Common myeloid progenitor, CD34-positive (primary cell): ENCODE measurements at regions of chr11 and their contacts with region 1.

Region 1: GRCh38 chr11:75142714-75143419 is 8.0 kb upstream of the SLCO2B1 start:
- DNase-seq: peak; percentile 91 to 98 (median 97)
- H3K4me3 ChIP-seq: no peak overlapping the region
- H3K27ac ChIP-seq: no peak overlapping the region
- H3K4me1 ChIP-seq: peaks cover 4 to 29% (median 20%) of the 10 kb centered on the region in 4 experiments
- H3K27me3 ChIP-seq: peaks cover 0 to 4% (median 0%) of the 10 kb centered on the region in 5 experiments

Region 2: GRCh38 chr11:75087319-75088305 is 55.3 kb before region 1 on chr11:
- CTCF ChIA-PET with region 1: no interaction called
- POLR2A ChIA-PET with region 1: no interaction called
- DNase-seq: no peak
- H3K4me3 ChIP-seq: no peak overlapping the region
- H3K27ac ChIP-seq: no peak overlapping the region
- H3K4me1 ChIP-seq: no peaks in the 10 kb centered on the region
- H3K27me3 ChIP-seq: no peaks in the 10 kb centered on the region

Region 3: GRCh38 chr11:75103380-75104026 is 39.4 kb before region 1 on chr11:
- CTCF ChIA-PET with region 1: no interaction called
- POLR2A ChIA-PET with region 1: no interaction called
- DNase-seq: no peak
- H3K4me3 ChIP-seq: no peak overlapping the region
- H3K27ac ChIP-seq: no peak overlapping the region
- H3K4me1 ChIP-seq: no peaks in the 10 kb centered on the region
- H3K27me3 ChIP-seq: peaks cover 2 to 6% (median 3%) of the 10 kb centered on the region in 5 experiments

Region 4: GRCh38 chr11:75188671-75189070 is 45.8 kb after region 1 on chr11:
- CTCF ChIA-PET with region 1: interaction called, 32 read pairs
- POLR2A ChIA-PET with region 1: no interaction called
- DNase-seq: no peak
- H3K4me3 ChIP-seq: no peak overlapping the region
- H3K27ac ChIP-seq: no peak overlapping the region
- H3K4me1 ChIP-seq: peaks cover 0 to 4% (median 0%) of the 10 kb centered on the region in 4 experiments
- H3K27me3 ChIP-seq: peaks cover 0 to 10% (median 3%) of the 10 kb centered on the region in 5 experiments

Region 5: GRCh38 chr11:75204685-75205563 is 62.1 kb after region 1 on chr11:
- CTCF ChIA-PET with region 1: interaction called, 309 read pairs
- POLR2A ChIA-PET with region 1: interaction called, 3 read pairs
- DNase-seq: peak; percentile 69 to 87 (median 79)
- H3K4me3 ChIP-seq: no peak overlapping the region
- H3K27ac ChIP-seq: no peak overlapping the region
- H3K4me1 ChIP-seq: no peaks in the 10 kb centered on the region
- H3K27me3 ChIP-seq: peaks cover 0 to 25% (median 10%) of the 10 kb centered on the region in 5 experiments

Region 6: GRCh38 chr11:75241036-75241905 is 98.4 kb after region 1 on chr11:
- CTCF ChIA-PET with region 1: interaction called, 239 read pairs
- POLR2A ChIA-PET with region 1: no interaction called
- DNase-seq: peak; percentile 73 to 86 (median 85)
- H3K4me3 ChIP-seq: peak overlapping the region; percentile 13 to 79 (median 62)
- H3K27ac ChIP-seq: no peak overlapping the region
- H3K4me1 ChIP-seq: peaks cover 0 to 21% (median 18%) of the 10 kb centered on the region in 4 experiments
- H3K27me3 ChIP-seq: peaks cover 0 to 75% (median 50%) of the 10 kb centered on the region in 5 experiments

Region 7: GRCh38 chr11:75270896-75271418 is 128.1 kb after region 1 on chr11:
- CTCF ChIA-PET with region 1: interaction called, 40 read pairs
- POLR2A ChIA-PET with region 1: no interaction called
- DNase-seq: peak; percentile 31 to 49 (median 44)
- H3K4me3 ChIP-seq: no peak overlapping the region
- H3K27ac ChIP-seq: no peak overlapping the region
- H3K4me1 ChIP-seq: peaks cover 2 to 45% (median 32%) of the 10 kb centered on the region in 4 experiments
- H3K27me3 ChIP-seq: no peaks in the 10 kb centered on the region

Region 8: GRCh38 chr11:75301601-75302345 is 158.9 kb after region 1 on chr11:
- CTCF ChIA-PET with region 1: no interaction called
- POLR2A ChIA-PET with region 1: no interaction called
- DNase-seq: no peak
- H3K4me3 ChIP-seq: no peak overlapping the region
- H3K27ac ChIP-seq: peak overlapping the region in 1 of 2 experiments; percentile 47
- H3K4me1 ChIP-seq: peaks cover 0 to 15% (median 8%) of the 10 kb centered on the region in 4 experiments
- H3K27me3 ChIP-seq: no peaks in the 10 kb centered on the region